ENCODE measurements at regions of chr3 and their contacts with region 1.

Region 1: DNA sequence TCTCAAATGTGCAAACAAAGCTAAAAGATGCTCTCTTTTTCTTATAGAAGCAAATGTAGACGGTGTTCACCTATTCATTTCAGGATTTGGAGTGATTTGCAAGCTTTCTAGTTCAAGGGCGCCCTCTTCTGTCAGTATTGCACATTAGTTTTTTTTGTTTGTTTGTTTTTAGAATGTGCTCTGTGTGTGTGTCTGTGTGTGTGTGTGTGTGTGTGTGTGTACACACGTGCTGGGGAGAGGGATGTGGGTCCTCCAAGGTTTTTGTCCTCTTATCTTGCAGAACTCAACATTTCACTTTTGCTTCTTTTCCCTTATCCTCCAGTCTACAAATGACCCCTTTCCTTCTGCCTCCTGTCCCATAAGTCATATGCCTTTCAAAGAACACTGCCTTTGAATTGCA is 23.5 kb downstream of the DNAH1 start:
- DNase-seq: peak; percentile 63
- ATAC-seq: peak; percentile 84
- H3K4me3 Mint-ChIP-seq: no peak overlapping the region
- H3K27ac Mint-ChIP-seq: no peak overlapping the region
- H3K4me1 Mint-ChIP-seq: peaks cover 3% of the 10 kb centered on the region
- H3K27me3 Mint-ChIP-seq: no peaks in the 10 kb centered on the region
- CTCF ChIP-seq: peak; percentile 88

Region 2: GRCh38 chr3:52210550-52211046 is 129.0 kb before region 1 on chr3:
- CTCF ChIA-PET with region 1: interaction called, 10 read pairs
- POLR2A ChIA-PET with region 1: no interaction called
- intact Hi-C with region 1: no loop called
- DNase-seq: no peak
- ATAC-seq: no peak
- H3K4me3 Mint-ChIP-seq: no peak overlapping the region
- H3K27ac Mint-ChIP-seq: no peak overlapping the region
- H3K4me1 Mint-ChIP-seq: peaks cover 3% of the 10 kb centered on the region
- H3K27me3 Mint-ChIP-seq: no peaks in the 10 kb centered on the region
- CTCF ChIP-seq: no peak

Region 3: DNA sequence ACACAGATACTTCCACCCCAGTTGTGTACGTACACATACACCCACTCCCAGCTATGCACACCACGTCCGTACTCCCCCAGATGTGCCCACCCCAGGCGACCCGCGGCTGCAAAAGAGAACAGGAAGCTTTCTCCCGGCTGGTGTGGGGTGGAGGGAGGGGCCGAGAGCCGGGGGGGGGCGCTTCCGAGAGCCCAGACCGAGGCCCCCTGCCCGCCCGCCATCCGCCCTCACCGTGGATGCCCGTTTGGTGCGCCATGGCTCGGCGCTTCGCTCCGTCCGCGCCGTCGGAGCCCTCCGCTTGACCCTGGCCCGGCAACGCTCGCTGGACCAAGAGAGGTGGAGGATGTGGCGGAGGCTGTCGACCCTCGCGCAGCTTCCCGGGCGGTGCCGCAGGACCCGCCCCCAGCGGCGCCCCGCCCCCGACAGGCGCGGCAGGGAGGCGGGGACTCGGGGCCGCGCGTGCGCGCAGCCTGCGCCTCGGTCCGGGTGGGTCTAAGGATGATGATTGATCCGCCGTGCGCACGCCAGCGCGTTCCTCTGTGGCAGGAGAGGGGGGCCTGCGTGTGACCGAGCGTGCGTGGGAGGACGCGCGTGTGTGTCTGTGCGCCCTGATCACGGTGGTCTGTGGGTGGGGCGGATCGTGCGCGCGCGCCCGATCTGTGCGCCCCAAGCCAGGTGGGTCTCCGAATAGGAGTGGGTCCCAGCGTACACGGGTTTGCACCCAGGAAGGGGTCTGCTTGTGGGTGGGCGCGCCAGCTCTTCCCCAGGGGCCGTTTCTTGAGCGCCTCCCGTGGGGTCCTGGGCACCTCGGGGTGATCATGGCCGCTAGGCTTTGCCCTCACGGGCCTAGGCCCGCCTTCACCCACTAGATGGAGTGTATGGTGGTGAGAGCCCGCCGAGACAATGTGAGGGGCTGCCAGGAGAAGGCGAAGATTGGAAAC is 100.6 kb before region 1 on chr3 and contains the start of gene TWF2:
- CTCF ChIA-PET with region 1: interaction called, 194 read pairs
- POLR2A ChIA-PET with region 1: no interaction called
- intact Hi-C with region 1: no loop called
- DNase-seq: peak; percentile 91
- ATAC-seq: peak; percentile 74
- H3K4me3 Mint-ChIP-seq: peak within 1 kb of the TSS; percentile 99
- H3K27ac Mint-ChIP-seq: peak within 1 kb of the TSS; percentile 97
- H3K4me1 Mint-ChIP-seq: peaks cover 67% of the 10 kb centered on the region
- H3K27me3 Mint-ChIP-seq: no peaks in the 10 kb centered on the region
- CTCF ChIP-seq: peak; percentile 30
- total RNA-seq, gene TWF2: 137 TPM

Region 4: DNA sequence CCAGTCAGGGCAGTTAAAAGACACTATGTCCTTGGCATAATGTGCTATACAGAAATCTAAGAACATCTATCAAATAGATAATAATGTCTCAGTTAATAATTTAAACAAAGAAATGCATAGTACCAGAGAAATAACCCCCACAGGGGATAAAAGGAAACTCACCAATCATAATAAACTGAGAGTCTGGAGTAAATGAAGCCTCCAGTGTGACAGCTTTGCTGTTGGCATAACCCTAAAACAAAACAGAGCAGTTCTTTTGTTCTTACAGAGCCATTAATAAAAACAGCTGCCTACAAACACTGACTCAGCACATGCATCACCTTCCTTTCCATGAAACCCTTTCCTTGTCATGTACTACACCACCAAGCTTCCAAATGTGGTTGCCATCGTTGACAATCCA is 80.6 kb before region 1 on chr3:
- CTCF ChIA-PET with region 1: interaction called, 16 read pairs
- POLR2A ChIA-PET with region 1: no interaction called
- intact Hi-C with region 1: no loop called
- DNase-seq: no peak
- ATAC-seq: no peak
- H3K4me3 Mint-ChIP-seq: no peak overlapping the region
- H3K27ac Mint-ChIP-seq: peak overlapping the region; percentile 79
- H3K4me1 Mint-ChIP-seq: peaks cover 92% of the 10 kb centered on the region
- H3K27me3 Mint-ChIP-seq: no peaks in the 10 kb centered on the region
- CTCF ChIP-seq: no peak

Region 5: GRCh38 chr3:52291508-52292181 is 48.0 kb before region 1 on chr3:
- CTCF ChIA-PET with region 1: interaction called, 264 read pairs
- POLR2A ChIA-PET with region 1: interaction called, 5 read pairs
- intact Hi-C with region 1: loop called (anchors 2 kb)
- DNase-seq: peak; percentile 63
- ATAC-seq: peak; percentile 28
- H3K4me3 Mint-ChIP-seq: no peak overlapping the region
- H3K27ac Mint-ChIP-seq: no peak overlapping the region
- H3K4me1 Mint-ChIP-seq: peaks cover 22% of the 10 kb centered on the region
- H3K27me3 Mint-ChIP-seq: no peaks in the 10 kb centered on the region
- CTCF ChIP-seq: peak; percentile 78

Region 6: DNA sequence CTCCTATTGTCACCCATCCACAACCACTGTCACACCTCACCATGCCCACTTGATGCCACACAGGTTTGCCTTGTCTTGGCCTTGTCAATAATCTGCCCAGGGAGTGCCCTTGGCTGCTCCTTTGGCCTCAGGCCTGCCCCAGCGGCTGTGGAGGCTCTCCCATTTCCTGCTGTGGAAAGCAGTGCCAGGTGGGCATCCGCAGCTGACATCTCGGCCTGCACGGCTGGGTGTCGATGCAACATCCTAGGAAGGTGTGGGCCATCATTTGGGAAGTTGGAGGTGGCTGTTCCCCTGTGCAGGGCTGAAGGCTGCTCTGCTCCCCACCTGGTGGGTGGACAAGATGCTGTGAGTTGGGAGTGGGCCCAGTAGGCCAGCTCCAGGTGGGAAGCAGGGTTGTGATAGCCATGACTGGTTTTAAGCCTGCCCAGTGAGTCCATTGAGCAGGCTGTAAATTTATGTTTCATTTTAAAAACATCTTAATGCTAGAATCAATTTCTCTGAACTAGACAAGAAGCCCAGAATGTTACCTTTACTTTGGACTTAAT is 11.0 kb before region 1 on chr3:
- CTCF ChIA-PET with region 1: interaction called, 34 read pairs
- POLR2A ChIA-PET with region 1: no interaction called
- intact Hi-C with region 1: no loop called
- DNase-seq: no peak
- ATAC-seq: no peak
- H3K4me3 Mint-ChIP-seq: no peak overlapping the region
- H3K27ac Mint-ChIP-seq: no peak overlapping the region
- H3K4me1 Mint-ChIP-seq: no peaks in the 10 kb centered on the region
- H3K27me3 Mint-ChIP-seq: no peaks in the 10 kb centered on the region
- CTCF ChIP-seq: no peak

Region 7: GRCh38 chr3:52574056-52574965 is 234.7 kb after region 1 on chr3:
- CTCF ChIA-PET with region 1: no interaction called
- POLR2A ChIA-PET with region 1: no interaction called
- intact Hi-C with region 1: no loop called
- DNase-seq: no peak
- ATAC-seq: no peak
- H3K4me3 Mint-ChIP-seq: no peak overlapping the region
- H3K27ac Mint-ChIP-seq: peak overlapping the region; percentile 22
- H3K4me1 Mint-ChIP-seq: no peaks in the 10 kb centered on the region
- H3K27me3 Mint-ChIP-seq: no peaks in the 10 kb centered on the region
- CTCF ChIP-seq: no peak

Region 8: DNA sequence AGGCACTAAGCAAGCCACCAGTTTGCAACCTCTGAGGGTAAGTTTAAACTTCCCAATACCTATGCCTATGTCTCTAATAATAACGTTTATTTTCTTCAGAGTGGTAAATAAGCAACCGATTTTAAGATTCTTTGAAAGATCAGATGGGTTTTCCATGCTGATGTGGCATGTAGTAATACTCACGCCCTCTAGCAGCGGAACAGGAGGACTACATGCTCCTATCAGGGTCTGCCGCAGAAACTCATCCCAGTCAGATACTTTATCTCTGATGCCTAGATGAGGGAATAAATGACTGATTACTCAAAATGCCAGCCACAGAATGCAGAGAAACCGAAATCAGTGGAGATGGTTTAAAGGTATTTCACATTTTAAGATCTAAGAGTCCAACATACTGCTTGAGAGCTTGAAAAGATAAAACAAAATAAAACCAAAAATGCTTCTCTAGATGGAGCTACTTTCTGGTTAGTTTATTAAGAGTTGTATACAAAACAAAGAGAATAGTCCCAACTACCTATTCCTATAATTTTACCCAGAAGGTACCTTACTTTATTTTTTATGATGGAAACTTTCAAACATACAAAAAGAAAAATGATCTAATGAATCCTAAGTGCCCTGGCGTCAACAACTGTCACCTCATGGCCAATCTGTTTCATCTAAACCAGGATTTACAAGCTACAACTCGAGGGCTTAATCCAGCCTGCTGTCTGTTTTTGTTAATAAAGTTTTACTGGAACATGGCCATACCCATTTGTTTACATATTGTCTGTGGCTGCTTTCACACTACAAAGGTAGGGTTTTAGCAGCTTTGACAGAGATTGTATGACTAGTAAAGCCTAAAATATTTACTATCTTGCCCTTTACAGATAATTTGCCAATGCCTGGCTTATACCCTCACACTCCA is 595.3 kb after region 1 on chr3:
- CTCF ChIA-PET with region 1: no interaction called
- POLR2A ChIA-PET with region 1: no interaction called
- intact Hi-C with region 1: no loop called
- DNase-seq: peak; percentile 71
- ATAC-seq: peak; percentile 99
- H3K4me3 Mint-ChIP-seq: no peak overlapping the region
- H3K27ac Mint-ChIP-seq: peak overlapping the region; percentile 36
- H3K4me1 Mint-ChIP-seq: peaks cover 6% of the 10 kb centered on the region
- H3K27me3 Mint-ChIP-seq: no peaks in the 10 kb centered on the region
- CTCF ChIP-seq: peak; percentile 79